Heart right ventricle (tissue), 16 donors: ENCODE measurements at regions of chr5 and their contacts with region 1.

Region 1: DNA sequence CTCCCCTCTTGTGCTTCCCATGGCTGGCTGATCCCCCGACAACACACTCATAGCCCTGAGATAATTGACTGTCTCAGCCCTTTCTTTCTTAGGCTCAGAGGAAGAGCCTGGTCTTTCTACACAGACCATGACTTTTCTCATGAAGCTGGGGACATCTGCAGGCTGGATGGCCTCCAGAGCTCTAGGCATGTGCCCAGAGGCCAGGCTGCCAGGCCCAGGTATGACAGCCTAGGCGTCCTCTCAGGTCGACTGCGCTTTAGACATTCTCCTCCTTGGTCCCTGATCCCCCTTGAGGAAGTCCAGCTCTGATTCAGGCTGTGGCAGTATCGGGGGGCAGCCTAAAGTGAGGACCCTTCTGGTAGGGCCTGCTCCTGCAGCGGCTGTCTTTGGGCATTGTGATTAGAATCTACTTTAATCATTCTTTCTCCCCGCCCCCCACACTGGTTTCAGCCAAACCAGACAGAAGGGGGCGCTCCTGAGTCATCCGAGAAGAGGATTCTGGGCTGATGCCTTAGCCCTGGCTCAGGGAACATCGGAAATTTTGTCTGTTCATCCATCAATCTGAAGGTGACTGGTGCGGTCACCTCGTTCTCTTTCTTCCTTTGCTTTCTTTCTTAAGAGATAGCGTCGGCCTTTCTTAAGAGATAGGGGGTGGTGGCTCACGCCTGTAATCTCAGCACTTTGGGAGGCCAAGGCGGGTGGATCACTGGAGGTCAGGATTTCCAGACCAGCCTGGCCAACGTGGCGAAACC is 66.5 kb upstream of the HSPA9 start:
- DNase-seq: peak; percentile 68 to 74
- ATAC-seq: peak in 7 of 8 donors; percentile 58 to 84 (median 69)
- H3K4me3 ChIP-seq: no peak overlapping the region
- H3K27ac ChIP-seq: no peak overlapping the region
- H3K4me1 ChIP-seq: peaks cover 0 to 5% (median 0%) of the 10 kb centered on the region in 9 donors
- H3K27me3 ChIP-seq: peaks cover 0 to 9% (median 0%) of the 10 kb centered on the region in 7 donors
- CTCF ChIP-seq: peak; percentile 67 to 89 (median 78)

Region 2: DNA sequence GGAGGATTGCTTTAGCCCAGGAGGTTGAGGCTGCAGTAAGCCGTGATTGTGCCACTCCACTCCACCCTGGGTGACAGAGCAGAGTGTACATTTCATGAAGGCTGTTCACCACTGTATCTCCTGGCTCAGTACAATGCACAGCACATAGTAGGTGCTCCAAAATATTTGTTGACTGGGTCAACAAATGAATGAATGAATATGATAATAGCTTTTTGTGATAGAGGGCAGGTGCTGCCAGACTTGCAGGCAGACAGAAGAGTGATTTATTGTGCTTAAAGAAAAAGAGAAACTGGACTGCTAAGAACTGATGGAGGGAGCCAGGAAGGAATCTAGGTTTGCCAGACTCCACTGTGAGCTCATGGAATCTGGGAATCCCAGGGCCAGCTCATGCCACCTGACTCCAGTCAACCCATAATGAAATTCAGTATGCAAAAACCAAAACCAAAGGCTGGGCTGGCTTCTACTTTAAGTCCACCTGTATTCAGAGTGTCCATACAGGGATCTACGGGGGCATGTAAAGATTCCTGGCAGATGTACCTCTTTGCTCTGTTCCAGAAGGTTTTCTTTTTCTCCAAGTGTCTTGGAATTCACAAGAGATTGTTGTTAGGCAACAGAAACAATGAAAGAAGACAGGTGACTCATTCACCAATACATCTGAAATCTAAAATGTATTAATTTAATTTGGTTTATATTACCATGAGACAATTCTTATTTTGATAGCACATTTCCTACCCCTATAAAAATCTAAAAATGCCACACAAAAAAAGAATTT is 96.0 kb after region 1 on chr5:
- intact Hi-C with region 1: loop called in 1 of 10 experiments (anchors 10 kb)
- DNase-seq: no peak
- ATAC-seq: no peak
- H3K4me3 ChIP-seq: no peak overlapping the region
- H3K27ac ChIP-seq: no peak overlapping the region
- H3K4me1 ChIP-seq: peaks cover 0 to 15% (median 0%) of the 10 kb centered on the region in 9 donors
- H3K27me3 ChIP-seq: no peaks in the 10 kb centered on the region
- CTCF ChIP-seq: no peak

Region 3: GRCh38 chr5:138789771-138790242 is 148.1 kb after region 1 on chr5:
- intact Hi-C with region 1: no loop called
- DNase-seq: no peak
- ATAC-seq: peak in 2 of 8 donors; percentile 31 to 36
- H3K4me3 ChIP-seq: no peak overlapping the region
- H3K27ac ChIP-seq: no peak overlapping the region
- H3K4me1 ChIP-seq: peaks cover 2 to 93% (median 59%) of the 10 kb centered on the region in 9 donors
- H3K27me3 ChIP-seq: no peaks in the 10 kb centered on the region
- CTCF ChIP-seq: peak in 7 of 9 donors; percentile 47 to 69 (median 55)

Region 4: DNA sequence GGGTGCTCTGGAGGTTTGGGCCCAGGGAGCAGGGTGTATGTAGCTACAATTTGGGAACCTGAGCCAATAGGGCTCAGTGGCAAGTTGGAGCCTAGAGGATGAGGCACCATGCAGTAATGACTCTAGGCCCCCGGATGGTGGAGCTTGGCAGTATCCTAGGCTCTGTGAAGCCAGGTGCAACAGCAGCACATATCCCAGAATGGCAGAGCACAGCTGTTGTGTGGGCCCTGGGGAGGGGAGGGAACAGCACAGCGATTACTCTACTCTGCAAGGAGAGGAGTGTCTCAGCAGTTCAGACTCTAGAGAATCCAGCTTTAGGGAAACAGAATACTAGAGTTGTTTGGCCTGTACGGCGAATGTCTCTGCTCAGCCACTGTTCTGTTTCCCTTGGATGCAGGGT is 177.4 kb after region 1 on chr5:
- intact Hi-C with region 1: loop called in 1 of 10 experiments (anchors 10 kb)
- DNase-seq: no peak
- ATAC-seq: peak in 3 of 8 donors; percentile 12 to 52 (median 36)
- H3K4me3 ChIP-seq: no peak overlapping the region
- H3K27ac ChIP-seq: no peak overlapping the region
- H3K4me1 ChIP-seq: peaks cover 0 to 67% (median 49%) of the 10 kb centered on the region in 9 donors
- H3K27me3 ChIP-seq: no peaks in the 10 kb centered on the region
- CTCF ChIP-seq: no peak

Region 5: DNA sequence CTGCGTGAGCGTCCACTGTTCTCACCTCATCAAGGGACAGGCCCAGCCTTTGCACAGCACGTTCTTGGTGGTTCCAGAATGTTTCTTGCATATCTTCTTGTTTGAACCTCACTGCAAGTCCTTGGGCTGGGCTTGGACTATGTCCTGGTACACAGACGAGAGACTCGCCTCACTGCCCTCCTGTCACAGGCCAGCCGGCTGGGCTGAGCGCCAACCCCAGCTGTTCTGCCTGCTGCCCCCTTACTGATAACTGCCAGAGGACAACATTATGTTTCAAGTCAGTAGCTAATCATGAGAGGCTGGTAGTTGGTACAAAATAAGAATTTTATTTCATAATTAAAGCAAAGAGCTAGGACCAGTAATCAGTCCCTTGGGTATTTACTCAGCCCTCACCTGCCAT is 286.3 kb after region 1 on chr5:
- intact Hi-C with region 1: loop called in 1 of 10 experiments (anchors 10 kb)
- DNase-seq: peak; percentile 76 to 82
- ATAC-seq: peak; percentile 76 to 95 (median 90)
- H3K4me3 ChIP-seq: no peak overlapping the region
- H3K27ac ChIP-seq: peak overlapping the region; percentile 19 to 81 (median 64)
- H3K4me1 ChIP-seq: peaks cover 0 to 48% (median 31%) of the 10 kb centered on the region in 9 donors
- H3K27me3 ChIP-seq: no peaks in the 10 kb centered on the region
- CTCF ChIP-seq: no peak